B cell (primary cell): ENCODE measurements at regions of chr6 and their contacts with region 1.

Region 1: GRCh38 chr6:152736687-152737273 is 13.8 kb upstream of the VIP start:
- DNase-seq: no peak
- ATAC-seq: no peak
- H3K4me3 ChIP-seq: no peak overlapping the region
- H3K4me3 Mint-ChIP-seq: no peak overlapping the region
- H3K27ac ChIP-seq: no peak overlapping the region
- H3K27ac Mint-ChIP-seq: no peak overlapping the region
- H3K4me1 ChIP-seq: no peaks in the 10 kb centered on the region
- H3K4me1 Mint-ChIP-seq: no peaks in the 10 kb centered on the region
- H3K27me3 ChIP-seq: no peaks in the 10 kb centered on the region
- H3K27me3 Mint-ChIP-seq: no peaks in the 10 kb centered on the region
- CTCF ChIP-seq: no peak

Region 2: GRCh38 chr6:153059761-153060160 is 323.0 kb after region 1 on chr6:
- CTCF ChIA-PET with region 1: no interaction called
- POLR2A ChIA-PET with region 1: no interaction called
- intact Hi-C with region 1: no loop called
- DNase-seq: no peak
- ATAC-seq: no peak
- H3K4me3 ChIP-seq: no peak overlapping the region
- H3K4me3 Mint-ChIP-seq: no peak overlapping the region
- H3K27ac ChIP-seq: no peak overlapping the region
- H3K27ac Mint-ChIP-seq: no peak overlapping the region
- H3K4me1 ChIP-seq: no peaks in the 10 kb centered on the region
- H3K4me1 Mint-ChIP-seq: no peaks in the 10 kb centered on the region
- H3K27me3 ChIP-seq: no peaks in the 10 kb centered on the region
- H3K27me3 Mint-ChIP-seq: peaks cover 13% of the 10 kb centered on the region
- CTCF ChIP-seq: no peak

Region 3: GRCh38 chr6:153767127-153767526 is 1030.3 kb after region 1 on chr6:
- CTCF ChIA-PET with region 1: no interaction called
- POLR2A ChIA-PET with region 1: no interaction called
- intact Hi-C with region 1: loop called (anchors 5 kb)
- DNase-seq: no peak
- ATAC-seq: no peak
- H3K4me3 ChIP-seq: no peak overlapping the region
- H3K4me3 Mint-ChIP-seq: no peak overlapping the region
- H3K27ac ChIP-seq: no peak overlapping the region
- H3K27ac Mint-ChIP-seq: no peak overlapping the region
- H3K4me1 ChIP-seq: no peaks in the 10 kb centered on the region
- H3K4me1 Mint-ChIP-seq: no peaks in the 10 kb centered on the region
- H3K27me3 ChIP-seq: no peaks in the 10 kb centered on the region
- H3K27me3 Mint-ChIP-seq: no peaks in the 10 kb centered on the region
- CTCF ChIP-seq: no peak